ENCODE measurements at regions of chr1 and their contacts with region 1.

Region 1: DNA sequence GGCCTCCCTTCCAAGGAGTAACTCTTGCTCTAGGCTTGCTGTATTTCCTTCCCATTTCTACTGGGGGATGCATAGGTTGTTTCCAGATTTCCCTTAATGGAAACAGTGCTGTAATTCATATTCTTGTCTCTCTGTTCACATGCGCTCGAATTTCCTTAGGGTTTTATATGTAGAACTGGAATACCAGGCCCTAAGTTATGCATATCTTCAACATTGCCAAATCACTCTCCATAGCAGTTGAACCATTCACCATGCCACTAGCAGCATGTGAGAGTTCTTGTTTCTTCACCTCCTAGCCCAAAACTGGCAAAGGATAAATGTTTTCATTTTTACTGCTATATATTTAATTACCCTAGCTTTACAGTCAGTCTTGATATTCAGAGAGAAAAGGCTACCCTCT is 12.8 kb downstream of the MAP10 start:
- DNase-seq: no peak
- ATAC-seq: no peak
- H3K4me3 ChIP-seq: no peak overlapping the region
- H3K27ac ChIP-seq: no peak overlapping the region
- H3K4me1 ChIP-seq: no peaks in the 10 kb centered on the region
- H3K27me3 ChIP-seq: no peaks in the 10 kb centered on the region
- CTCF ChIP-seq: no peak
- EP300 ChIP-seq: no peak
- POLR2A ChIP-seq: no peak
- RAD21 ChIP-seq: no peak

Region 2: GRCh38 chr1:232805269-232806185 is 12.5 kb before region 1 on chr1 and contains the start of gene MAP10:
- CTCF ChIA-PET with region 1: no interaction called
- POLR2A ChIA-PET with region 1: no interaction called
- in situ Hi-C with region 1: no loop called
- intact Hi-C with region 1: no loop called
- DNase-seq: no peak
- ATAC-seq: no peak
- H3K4me3 ChIP-seq: no peak within 1 kb of the TSS
- H3K27ac ChIP-seq: no peak within 1 kb of the TSS
- H3K4me1 ChIP-seq: peaks cover 9% of the 10 kb centered on the region
- H3K27me3 ChIP-seq: no peaks in the 10 kb centered on the region; a peak in 1 of 5 replicates
- CTCF ChIP-seq: no peak
- EP300 ChIP-seq: no peak
- POLR2A ChIP-seq: no peak
- RAD21 ChIP-seq: no peak
- total RNA-seq, gene MAP10: not detected in 2 replicates

Region 3: GRCh38 chr1:232856541-232856940 is 38.5 kb after region 1 on chr1:
- CTCF ChIA-PET with region 1: no interaction called
- POLR2A ChIA-PET with region 1: no interaction called
- in situ Hi-C with region 1: no loop called
- intact Hi-C with region 1: loop called (anchors 1 kb)
- DNase-seq: no peak
- ATAC-seq: no peak
- H3K4me3 ChIP-seq: no peak overlapping the region
- H3K27ac ChIP-seq: no peak overlapping the region
- H3K4me1 ChIP-seq: no peaks in the 10 kb centered on the region
- H3K27me3 ChIP-seq: 0 out of 5 replicates have a peak, but pooled peaks cover 0 to 5% of the 10 kb centered on the region in 2 experiments
- CTCF ChIP-seq: no peak
- EP300 ChIP-seq: no peak
- POLR2A ChIP-seq: no peak
- RAD21 ChIP-seq: no peak